Aorta (tissue), 5 donors: ENCODE measurements at regions of chr17 and their contacts with region 1.

Region 1: DNA sequence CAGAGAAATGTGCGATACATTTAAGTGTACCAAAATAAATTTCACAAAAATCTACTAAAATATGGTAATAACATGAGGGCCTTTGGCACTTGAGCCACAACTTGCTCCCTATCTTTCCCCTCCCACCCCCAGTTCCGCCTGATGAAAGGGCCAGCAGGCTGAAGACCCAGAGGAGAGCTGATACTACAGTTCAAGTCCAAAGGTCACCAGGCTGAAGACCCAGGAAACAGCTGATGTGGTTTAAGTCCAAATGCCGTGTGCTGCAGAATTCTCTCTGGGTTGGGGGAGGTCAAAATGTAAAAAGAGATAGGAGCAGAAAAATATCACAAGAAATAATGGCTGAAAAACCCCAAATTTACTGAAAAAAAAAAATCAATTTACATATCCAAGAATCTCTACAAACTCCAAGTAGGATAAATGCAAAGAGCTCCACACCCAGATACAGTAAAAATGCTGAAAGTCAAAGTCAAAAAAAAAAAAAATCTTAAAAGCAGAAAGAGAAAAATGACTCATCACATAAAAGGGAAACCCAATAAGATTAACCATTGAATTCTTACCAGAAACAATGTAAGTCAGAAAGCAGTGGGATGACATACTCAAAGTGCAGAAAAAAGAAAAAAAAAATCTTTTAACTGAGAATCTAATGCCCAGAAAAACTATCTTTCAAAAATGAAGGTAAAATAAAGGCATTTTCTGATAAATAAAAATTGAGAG is 452.1 kb upstream of the ASIC2 start:
- DNase-seq: no peak
- ATAC-seq: no peak
- H3K4me3 ChIP-seq: no peak overlapping the region
- H3K27ac ChIP-seq: no peak overlapping the region
- H3K4me1 ChIP-seq: no peaks in the 10 kb centered on the region
- H3K27me3 ChIP-seq: no peaks in the 10 kb centered on the region

Region 2: GRCh38 chr17:33038740-33039139 is 706.5 kb before region 1 on chr17:
- intact Hi-C with region 1: loop called in 1 of 2 experiments (anchors 10 kb)
- DNase-seq: peak in 1 of 2 donors; percentile 55
- ATAC-seq: no peak
- H3K4me3 ChIP-seq: no peak overlapping the region
- H3K27ac ChIP-seq: no peak overlapping the region
- H3K4me1 ChIP-seq: no peaks in the 10 kb centered on the region
- H3K27me3 ChIP-seq: peaks cover 0 to 2% of the 10 kb centered on the region in 2 donors